A673 (cell line): ENCODE measurements at regions of chr13 and their contacts with region 1.

Region 1: DNA sequence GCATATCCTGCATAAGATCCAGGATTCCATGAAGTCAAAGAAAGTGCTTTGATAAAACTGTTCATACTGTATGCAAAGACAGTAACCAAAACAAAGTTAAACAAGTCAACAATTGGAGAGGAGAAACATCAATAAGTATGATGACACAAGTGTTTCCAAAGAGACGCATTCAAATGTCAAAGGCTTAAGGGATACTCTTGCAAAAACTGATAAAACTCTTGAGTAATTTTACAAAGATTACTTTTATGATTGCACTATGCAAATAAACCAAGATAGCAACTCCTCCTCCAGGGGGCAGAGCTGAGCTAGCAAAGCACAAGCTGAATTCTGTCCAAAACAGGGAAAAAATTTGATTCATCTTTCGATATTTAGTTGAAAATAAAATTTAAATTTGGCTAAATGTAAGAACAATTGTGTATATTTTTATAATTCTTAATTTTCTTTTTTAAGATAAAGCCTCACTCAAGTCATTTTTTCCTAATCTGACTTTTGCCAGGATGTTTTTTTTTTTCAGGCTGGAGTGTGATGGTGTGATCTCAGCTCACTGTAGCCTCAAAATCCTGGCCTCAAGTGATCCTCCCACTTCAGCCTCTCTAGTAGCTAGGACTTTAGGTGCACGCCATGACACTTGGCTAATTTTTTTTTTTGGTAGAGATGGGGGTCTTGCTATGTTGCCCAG is 84.0 kb downstream of the MZT1 start:
- DNase-seq: peak; percentile 54
- H3K4me3 ChIP-seq: no peak overlapping the region
- H3K27ac ChIP-seq: no peak overlapping the region
- H3K4me1 ChIP-seq: no peaks in the 10 kb centered on the region
- H3K27me3 ChIP-seq: peaks cover 52% of the 10 kb centered on the region
- CTCF ChIP-seq: peak; percentile 85

Region 2: DNA sequence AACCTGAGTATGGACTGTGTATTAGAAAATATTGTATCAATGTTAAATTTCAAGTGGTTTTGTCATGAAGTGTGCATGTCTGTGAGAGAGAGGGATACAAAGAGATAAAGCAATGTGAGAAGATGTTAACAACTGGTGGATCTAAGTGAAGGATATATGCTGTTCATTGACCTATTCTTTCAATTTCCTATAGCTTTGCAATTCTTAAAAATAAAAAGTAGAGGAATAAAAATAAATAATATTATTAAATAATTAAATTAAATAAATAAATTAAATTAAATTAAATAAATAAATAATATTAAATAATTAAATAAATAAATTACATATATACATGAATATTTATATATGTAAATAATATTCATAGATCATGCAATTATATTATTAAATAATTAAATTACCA is 645.2 kb before region 1 on chr13:
- CTCF ChIA-PET with region 1: no interaction called
- POLR2A ChIA-PET with region 1: no interaction called
- intact Hi-C with region 1: no loop called
- DNase-seq: no peak
- H3K4me3 ChIP-seq: no peak overlapping the region
- H3K27ac ChIP-seq: no peak overlapping the region
- H3K4me1 ChIP-seq: no peaks in the 10 kb centered on the region
- H3K27me3 ChIP-seq: no peaks in the 10 kb centered on the region
- CTCF ChIP-seq: no peak

Region 3: DNA sequence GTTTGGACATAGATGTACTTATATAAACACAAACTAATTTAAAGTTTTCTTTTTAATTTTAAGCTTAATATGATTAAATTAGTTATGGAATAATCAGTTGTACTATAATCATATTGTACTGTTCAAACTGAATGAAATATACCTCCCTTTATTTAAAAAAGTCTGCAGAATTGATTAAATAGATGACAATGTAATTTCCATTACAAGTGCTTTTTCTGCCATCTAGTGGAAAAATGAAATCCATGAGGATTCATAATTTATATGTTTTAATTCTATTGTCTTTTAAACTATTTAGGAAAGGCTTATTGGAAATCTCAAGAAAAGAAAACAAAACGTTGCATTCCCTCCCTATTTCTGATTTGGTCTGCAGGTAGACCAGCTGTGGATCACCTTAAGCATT is 53.1 kb after region 1 on chr13:
- CTCF ChIA-PET with region 1: interaction called, 3 read pairs
- POLR2A ChIA-PET with region 1: no interaction called
- intact Hi-C with region 1: loop called (anchors 2 kb)
- DNase-seq: peak; percentile 24
- H3K4me3 ChIP-seq: no peak overlapping the region
- H3K27ac ChIP-seq: no peak overlapping the region
- H3K4me1 ChIP-seq: peaks cover 6% of the 10 kb centered on the region
- H3K27me3 ChIP-seq: no peaks in the 10 kb centered on the region
- CTCF ChIP-seq: peak; percentile 63